Activated CD8-positive, alpha-beta T cell treated with anti-CD3 and anti-CD28 coated beads for 36 hours (primary cell): ENCODE measurements at regions of chr5 and their contacts with region 1.

Region 1: DNA sequence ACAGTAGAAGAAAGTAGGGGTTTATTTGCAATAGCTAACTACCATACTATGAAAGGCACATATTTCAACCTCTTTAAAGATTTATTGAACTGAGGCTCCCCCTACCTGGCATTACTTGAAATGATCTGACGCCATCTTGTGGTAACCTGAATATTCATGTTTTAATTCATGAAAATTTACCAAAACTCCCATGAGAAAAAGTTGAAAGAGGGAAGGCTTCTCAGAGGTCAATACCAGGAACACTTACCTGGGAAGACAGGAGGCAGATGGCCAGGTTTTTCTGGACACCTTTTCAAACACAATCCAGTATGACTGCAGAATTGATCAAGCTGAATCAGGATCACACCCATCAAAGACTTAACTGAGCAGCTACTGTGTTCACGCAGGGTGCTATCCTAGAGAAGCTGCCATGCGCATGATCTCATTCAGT is 9.4 kb downstream of the PRELID2 start:
- DNase-seq: no peak
- ATAC-seq: no peak
- H3K4me3 Mint-ChIP-seq: no peak overlapping the region
- H3K27ac Mint-ChIP-seq: no peak overlapping the region
- H3K4me1 Mint-ChIP-seq: no peaks in the 10 kb centered on the region
- H3K27me3 Mint-ChIP-seq: peaks cover 1% of the 10 kb centered on the region
- CTCF ChIP-seq: peak; percentile 86

Region 2: GRCh38 chr5:145681686-145682085 is 144.1 kb before region 1 on chr5:
- CTCF ChIA-PET with region 1: interaction called, 14 read pairs
- POLR2A ChIA-PET with region 1: no interaction called
- intact Hi-C with region 1: loop called (anchors 5 kb)
- DNase-seq: peak; percentile 63
- ATAC-seq: peak; percentile 86
- H3K4me3 Mint-ChIP-seq: no peak overlapping the region
- H3K27ac Mint-ChIP-seq: no peak overlapping the region
- H3K4me1 Mint-ChIP-seq: no peaks in the 10 kb centered on the region
- H3K27me3 Mint-ChIP-seq: no peaks in the 10 kb centered on the region
- CTCF ChIP-seq: peak; percentile 56

Region 3: GRCh38 chr5:145697251-145697990 is 128.3 kb before region 1 on chr5:
- CTCF ChIA-PET with region 1: interaction called, 8 read pairs
- POLR2A ChIA-PET with region 1: no interaction called
- intact Hi-C with region 1: loop called (anchors 5 kb)
- DNase-seq: peak; percentile 41
- ATAC-seq: no peak
- H3K4me3 Mint-ChIP-seq: no peak overlapping the region
- H3K27ac Mint-ChIP-seq: no peak overlapping the region
- H3K4me1 Mint-ChIP-seq: no peaks in the 10 kb centered on the region
- H3K27me3 Mint-ChIP-seq: no peaks in the 10 kb centered on the region
- CTCF ChIP-seq: peak; percentile 22